CD4-positive, alpha-beta memory T cell (primary cell): ENCODE measurements at regions of chr2 and their contacts with region 1.

Region 1: GRCh38 chr2:27281855-27282559 is at the start of gene TRIM54:
- DNase-seq: no peak
- H3K4me3 ChIP-seq: no peak within 1 kb of the TSS
- H3K4me3 Mint-ChIP-seq: no peak within 1 kb of the TSS
- H3K27ac ChIP-seq: no peak within 1 kb of the TSS
- H3K27ac Mint-ChIP-seq: peak within 1 kb of the TSS in 1 of 7 donors; percentile 62
- H3K4me1 ChIP-seq: no peaks in the 10 kb centered on the region
- H3K4me1 Mint-ChIP-seq: peaks cover 0 to 4% (median 1%) of the 10 kb centered on the region in 4 donors
- H3K27me3 ChIP-seq: peaks cover 6% of the 10 kb centered on the region
- H3K27me3 Mint-ChIP-seq: peaks cover 11 to 25% of the 10 kb centered on the region in 2 donors
- total RNA-seq, gene TRIM54: 0.17 TPM in 1 of 2 experiments, not detected in the other

Region 2: DNA sequence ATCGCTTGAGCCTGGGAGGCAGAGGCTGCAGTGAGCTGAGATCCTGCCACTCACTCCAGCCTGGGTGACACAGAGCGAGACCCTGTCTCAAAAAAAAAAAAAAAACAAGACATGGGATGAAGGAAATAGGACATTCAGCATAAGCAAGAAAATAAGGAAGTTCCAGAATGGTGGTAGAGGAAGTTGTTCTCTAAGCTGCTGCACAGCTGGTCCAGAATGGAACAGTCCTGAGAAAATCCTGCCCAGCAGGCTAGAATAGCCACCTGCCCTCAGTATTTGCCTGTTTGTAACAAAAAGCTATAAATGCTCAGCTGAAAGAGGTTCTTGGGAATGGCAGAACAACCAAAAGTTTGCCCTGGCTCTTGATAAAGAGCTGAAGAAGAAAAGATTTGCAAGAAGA is 322.7 kb before region 1 on chr2:
- CTCF ChIA-PET with region 1: interaction called, 125 read pairs
- POLR2A ChIA-PET with region 1: interaction called, 4 read pairs
- intact Hi-C with region 1: loop called (anchors 1 kb)
- DNase-seq: no peak
- H3K4me3 ChIP-seq: no peak overlapping the region
- H3K4me3 Mint-ChIP-seq: no peak overlapping the region
- H3K27ac ChIP-seq: no peak overlapping the region
- H3K27ac Mint-ChIP-seq: no peak overlapping the region
- H3K4me1 ChIP-seq: no peaks in the 10 kb centered on the region
- H3K4me1 Mint-ChIP-seq: peaks cover 0 to 4% (median 0%) of the 10 kb centered on the region in 4 donors
- H3K27me3 ChIP-seq: peaks cover 5% of the 10 kb centered on the region
- H3K27me3 Mint-ChIP-seq: peaks cover 19 to 21% of the 10 kb centered on the region in 2 donors

Region 3: DNA sequence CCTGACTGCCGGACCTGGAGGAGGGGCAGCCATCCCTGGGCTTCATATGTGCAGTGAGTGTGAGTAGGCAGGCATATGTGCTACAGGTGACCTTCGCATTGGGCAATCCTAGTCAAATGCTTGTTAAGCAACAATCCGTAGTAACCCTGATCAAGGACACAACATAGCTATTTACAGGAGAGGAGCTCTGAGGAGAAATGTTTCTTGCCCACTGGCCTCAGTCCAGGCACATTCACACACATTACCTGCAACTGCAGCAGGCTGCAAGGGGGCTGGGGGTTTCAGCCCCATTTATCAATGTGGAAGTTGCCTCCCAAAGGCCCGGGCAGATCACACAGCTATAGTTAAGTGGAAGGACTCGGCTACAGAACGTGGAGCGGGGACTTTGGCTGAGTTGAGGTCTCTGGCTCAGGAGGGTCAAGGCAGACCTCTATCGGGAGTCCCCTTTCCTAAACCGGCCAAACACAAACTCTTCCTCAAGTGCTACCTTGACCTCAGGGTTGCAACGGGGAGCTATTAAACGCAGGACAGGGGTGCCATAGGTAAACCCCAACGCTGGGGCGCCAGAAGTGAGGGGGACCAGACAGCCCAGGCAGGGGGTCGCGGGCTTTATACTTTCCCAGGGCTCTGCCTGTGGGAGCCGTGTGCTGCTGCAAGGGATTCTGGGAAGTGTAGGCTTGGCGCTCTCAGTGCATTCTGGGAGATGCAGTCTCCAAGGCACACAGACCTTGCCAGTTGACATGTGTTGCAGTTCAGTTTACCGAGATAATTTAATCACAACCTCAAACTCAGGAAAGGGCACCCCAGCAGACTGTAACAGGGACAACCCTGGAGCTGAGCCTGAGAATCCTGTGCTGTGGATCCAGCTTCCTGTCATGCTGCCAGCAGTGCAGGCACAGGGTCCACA is 186.0 kb before region 1 on chr2:
- CTCF ChIA-PET with region 1: interaction called, 121 read pairs
- POLR2A ChIA-PET with region 1: interaction called, 3 read pairs
- intact Hi-C with region 1: no loop called
- DNase-seq: peak in 3 of 5 donors; percentile 34 to 39 (median 37)
- H3K4me3 ChIP-seq: no peak overlapping the region
- H3K4me3 Mint-ChIP-seq: peak overlapping the region in 7 of 8 donors; percentile 5 to 81 (median 61)
- H3K27ac ChIP-seq: no peak overlapping the region
- H3K27ac Mint-ChIP-seq: peak overlapping the region in 4 of 7 donors; percentile 35 to 84 (median 53)
- H3K4me1 ChIP-seq: peaks cover 9% of the 10 kb centered on the region
- H3K4me1 Mint-ChIP-seq: peaks cover 8 to 16% (median 10%) of the 10 kb centered on the region in 4 donors
- H3K27me3 ChIP-seq: no peaks in the 10 kb centered on the region
- H3K27me3 Mint-ChIP-seq: no peaks in the 10 kb centered on the region

Region 4: GRCh38 chr2:27249891-27250651 is 31.9 kb before region 1 on chr2:
- CTCF ChIA-PET with region 1: interaction called, 28 read pairs
- POLR2A ChIA-PET with region 1: interaction called, 3 read pairs
- intact Hi-C with region 1: loop called (anchors 1 kb)
- DNase-seq: peak in 4 of 5 donors; percentile 25 to 40 (median 32)
- H3K4me3 ChIP-seq: no peak overlapping the region
- H3K4me3 Mint-ChIP-seq: no peak overlapping the region
- H3K27ac ChIP-seq: no peak overlapping the region
- H3K27ac Mint-ChIP-seq: no peak overlapping the region
- H3K4me1 ChIP-seq: no peaks in the 10 kb centered on the region
- H3K4me1 Mint-ChIP-seq: peaks cover 0 to 1% (median 0%) of the 10 kb centered on the region in 4 donors
- H3K27me3 ChIP-seq: peaks cover 4% of the 10 kb centered on the region
- H3K27me3 Mint-ChIP-seq: peaks cover 10 to 16% of the 10 kb centered on the region in 2 donors

Region 5: DNA sequence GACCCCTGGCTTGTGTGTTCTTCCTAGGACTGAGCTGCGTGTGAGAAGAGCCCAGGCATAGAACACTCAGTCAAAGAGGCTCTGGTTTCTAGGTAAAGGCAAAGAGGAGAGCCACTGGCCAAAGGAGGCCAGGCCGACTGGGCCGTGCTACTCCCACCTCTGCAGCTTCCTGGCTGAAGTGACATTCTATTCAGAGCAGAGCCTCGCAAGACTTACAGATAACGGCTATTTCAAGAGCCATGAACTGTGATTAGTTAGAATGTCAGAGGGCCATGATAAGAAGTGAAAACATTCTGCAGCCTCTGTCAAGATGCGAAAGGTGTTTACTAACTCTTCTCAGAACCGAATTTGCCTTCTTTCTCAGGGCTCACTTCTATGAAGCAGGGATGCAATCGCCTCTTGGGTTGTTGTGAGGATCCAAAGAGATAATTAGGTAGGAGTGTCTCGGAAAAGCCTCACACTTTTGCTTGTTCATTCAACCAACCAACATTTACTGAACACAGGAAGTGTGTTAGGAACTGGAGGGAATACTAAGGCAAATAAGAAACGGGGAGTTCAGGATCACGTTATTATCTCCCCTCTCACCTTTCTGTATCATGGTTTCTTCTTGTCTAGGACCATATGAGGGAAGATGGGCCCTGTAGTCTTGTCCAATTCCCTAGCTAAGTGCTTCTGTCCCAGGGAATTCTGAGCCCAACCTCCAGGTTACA is 10.2 kb before region 1 on chr2:
- CTCF ChIA-PET with region 1: interaction called, 43 read pairs
- POLR2A ChIA-PET with region 1: no interaction called
- intact Hi-C with region 1: no loop called
- DNase-seq: no peak
- H3K4me3 ChIP-seq: no peak overlapping the region
- H3K4me3 Mint-ChIP-seq: no peak overlapping the region
- H3K27ac ChIP-seq: no peak overlapping the region
- H3K27ac Mint-ChIP-seq: no peak overlapping the region
- H3K4me1 ChIP-seq: no peaks in the 10 kb centered on the region
- H3K4me1 Mint-ChIP-seq: no peaks in the 10 kb centered on the region
- H3K27me3 ChIP-seq: no peaks in the 10 kb centered on the region
- H3K27me3 Mint-ChIP-seq: peaks cover 5 to 6% of the 10 kb centered on the region in 2 donors

Region 6: GRCh38 chr2:27335311-27335710 is 53.3 kb after region 1 on chr2:
- CTCF ChIA-PET with region 1: no interaction called
- POLR2A ChIA-PET with region 1: no interaction called
- intact Hi-C with region 1: no loop called
- DNase-seq: no peak
- H3K4me3 ChIP-seq: no peak overlapping the region
- H3K4me3 Mint-ChIP-seq: no peak overlapping the region
- H3K27ac ChIP-seq: no peak overlapping the region
- H3K27ac Mint-ChIP-seq: peak overlapping the region in 3 of 7 donors; percentile 33 to 56 (median 36)
- H3K4me1 ChIP-seq: no peaks in the 10 kb centered on the region
- H3K4me1 Mint-ChIP-seq: no peaks in the 10 kb centered on the region
- H3K27me3 ChIP-seq: no peaks in the 10 kb centered on the region
- H3K27me3 Mint-ChIP-seq: no peaks in the 10 kb centered on the region

Region 7: GRCh38 chr2:27356382-27357181 is 74.6 kb after region 1 on chr2 and contains the start of gene GTF3C2:
- CTCF ChIA-PET with region 1: no interaction called
- POLR2A ChIA-PET with region 1: no interaction called
- intact Hi-C with region 1: no loop called
- DNase-seq: peak; percentile 93 to 97 (median 93)
- H3K4me3 ChIP-seq: peak within 1 kb of the TSS; percentile 49 to 75
- H3K4me3 Mint-ChIP-seq: peak within 1 kb of the TSS; percentile 96 to 100 (median 98)
- H3K27ac ChIP-seq: peak within 1 kb of the TSS; percentile 85
- H3K27ac Mint-ChIP-seq: peak within 1 kb of the TSS; percentile 96 to 100 (median 99)
- H3K4me1 ChIP-seq: peaks cover 51% of the 10 kb centered on the region
- H3K4me1 Mint-ChIP-seq: peaks cover 36 to 64% (median 48%) of the 10 kb centered on the region in 4 donors
- H3K27me3 ChIP-seq: no peaks in the 10 kb centered on the region
- H3K27me3 Mint-ChIP-seq: no peaks in the 10 kb centered on the region
- total RNA-seq, gene GTF3C2: 82.9 to 90.8 TPM